HCT116 (cell line): ENCODE measurements at regions of chr11 and their contacts with region 1.

Region 1: DNA sequence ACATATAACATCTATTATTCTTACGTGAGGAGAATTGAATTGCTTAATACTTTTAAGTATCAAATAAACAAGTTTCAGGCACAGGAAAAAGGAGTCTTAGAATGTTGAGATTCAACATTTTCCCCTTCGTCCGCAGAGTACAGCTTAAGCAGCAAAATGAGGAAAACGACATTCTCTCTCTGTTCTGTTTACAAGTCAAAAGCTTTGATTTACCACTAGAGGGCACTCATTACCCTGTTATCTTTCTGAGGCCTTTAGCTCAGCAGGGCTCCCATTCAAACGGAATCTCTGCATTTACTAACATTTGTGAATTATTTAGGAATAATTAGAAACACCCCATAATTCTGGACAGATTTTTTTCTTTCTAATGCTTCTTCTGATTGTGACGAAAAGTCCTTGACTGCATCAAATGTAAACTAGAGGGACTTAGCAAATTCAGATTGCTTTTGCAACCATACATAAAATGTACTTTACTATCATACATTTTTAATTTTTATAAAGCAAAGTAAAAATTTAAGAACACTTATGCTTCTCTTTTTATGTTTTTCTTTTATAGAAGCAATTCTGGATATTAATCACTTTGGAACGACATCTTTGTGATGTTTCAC is 75.0 kb downstream of the JRKL start:
- DNase-seq: peak; percentile 67
- ATAC-seq: peak; percentile 84
- H3K4me3 ChIP-seq: peak overlapping the region in 1 of 2 experiments; percentile 39; a peak in 1 of 4 replicates
- H3K27ac ChIP-seq: no peak overlapping the region
- H3K4me1 ChIP-seq: peaks cover 4 to 7% of the 10 kb centered on the region in 2 experiments; a peak in 2 of 4 replicates
- H3K27me3 ChIP-seq: peaks cover 4% of the 10 kb centered on the region; the same call in 1 of the 2 replicates
- CTCF ChIP-seq: peak; percentile 24 to 79 (median 69); a peak in 4 of 6 replicates
- POLR2A ChIP-seq: no peak
- RAD21 ChIP-seq: peak; percentile 77

Region 2: GRCh38 chr11:96357794-96358193 is 107.0 kb before region 1 on chr11:
- CTCF ChIA-PET with region 1: no interaction called
- POLR2A ChIA-PET with region 1: no interaction called
- RAD21 ChIA-PET with region 1: no interaction called
- intact Hi-C with region 1: no loop called
- DNase-seq: no peak
- ATAC-seq: no peak
- H3K4me3 ChIP-seq: no peak overlapping the region
- H3K27ac ChIP-seq: no peak overlapping the region
- H3K4me1 ChIP-seq: no peaks in the 10 kb centered on the region
- H3K27me3 ChIP-seq: no peaks in the 10 kb centered on the region
- CTCF ChIP-seq: no peak
- POLR2A ChIP-seq: no peak
- RAD21 ChIP-seq: no peak

Region 3: GRCh38 chr11:96500440-96500839 is 35.6 kb after region 1 on chr11:
- CTCF ChIA-PET with region 1: no interaction called
- POLR2A ChIA-PET with region 1: no interaction called
- RAD21 ChIA-PET with region 1: no interaction called
- intact Hi-C with region 1: no loop called
- DNase-seq: no peak
- ATAC-seq: no peak
- H3K4me3 ChIP-seq: no peak overlapping the region
- H3K27ac ChIP-seq: no peak overlapping the region
- H3K4me1 ChIP-seq: no peaks in the 10 kb centered on the region
- H3K27me3 ChIP-seq: no peaks in the 10 kb centered on the region
- CTCF ChIP-seq: no peak
- POLR2A ChIP-seq: no peak
- RAD21 ChIP-seq: no peak

Region 4: GRCh38 chr11:96798445-96798844 is 333.6 kb after region 1 on chr11:
- CTCF ChIA-PET with region 1: interaction called, 4 read pairs
- POLR2A ChIA-PET with region 1: no interaction called
- RAD21 ChIA-PET with region 1: no interaction called
- intact Hi-C with region 1: loop called (anchors 5 kb)
- DNase-seq: no peak
- ATAC-seq: no peak
- H3K4me3 ChIP-seq: no peak overlapping the region
- H3K27ac ChIP-seq: no peak overlapping the region
- H3K4me1 ChIP-seq: no peaks in the 10 kb centered on the region
- H3K27me3 ChIP-seq: no peaks in the 10 kb centered on the region
- CTCF ChIP-seq: no peak
- POLR2A ChIP-seq: no peak
- RAD21 ChIP-seq: no peak

Region 5: DNA sequence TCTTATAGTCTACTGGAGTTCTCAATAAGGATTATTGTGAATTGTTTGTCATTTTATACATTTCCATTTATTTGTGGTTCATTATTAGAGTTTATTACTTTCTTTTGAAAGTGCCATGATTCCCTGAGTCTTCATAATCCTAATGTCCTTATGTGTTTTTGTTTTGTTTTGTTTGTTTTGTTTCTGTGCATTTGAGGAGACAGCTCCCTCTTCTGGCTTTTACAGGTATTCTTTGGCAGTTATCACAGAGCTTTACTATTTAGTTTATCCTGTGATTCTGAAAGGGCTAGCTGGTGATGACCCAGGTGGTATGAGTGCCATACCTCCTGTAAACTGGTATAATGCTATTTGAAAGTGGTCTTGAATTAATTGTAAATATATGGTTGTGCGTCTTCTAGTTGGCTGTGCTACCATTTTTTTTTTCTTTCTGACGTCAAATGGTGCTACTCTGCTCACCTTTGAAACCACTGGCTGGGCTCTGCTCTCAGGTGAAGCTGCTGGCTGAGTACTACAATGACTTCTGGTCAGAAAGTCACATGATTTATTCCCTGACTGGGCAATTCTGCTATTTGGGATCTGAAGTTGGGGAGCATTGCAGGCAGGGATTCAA is 676.2 kb after region 1 on chr11:
- CTCF ChIA-PET with region 1: interaction called, 78 read pairs
- POLR2A ChIA-PET with region 1: interaction called, 3 read pairs
- RAD21 ChIA-PET with region 1: no interaction called
- intact Hi-C with region 1: loop called (anchors 2 kb)
- DNase-seq: no peak
- ATAC-seq: no peak
- H3K4me3 ChIP-seq: no peak overlapping the region
- H3K27ac ChIP-seq: no peak overlapping the region
- H3K4me1 ChIP-seq: no peaks in the 10 kb centered on the region
- H3K27me3 ChIP-seq: no peaks in the 10 kb centered on the region
- CTCF ChIP-seq: peak in 2 of 3 experiments; percentile 21 to 44; a peak in 3 of 6 replicates
- POLR2A ChIP-seq: no peak
- RAD21 ChIP-seq: peak; percentile 37